Aorta (tissue), 5 donors: ENCODE measurements at regions of chr11 and their contacts with region 1.

Region 1: DNA sequence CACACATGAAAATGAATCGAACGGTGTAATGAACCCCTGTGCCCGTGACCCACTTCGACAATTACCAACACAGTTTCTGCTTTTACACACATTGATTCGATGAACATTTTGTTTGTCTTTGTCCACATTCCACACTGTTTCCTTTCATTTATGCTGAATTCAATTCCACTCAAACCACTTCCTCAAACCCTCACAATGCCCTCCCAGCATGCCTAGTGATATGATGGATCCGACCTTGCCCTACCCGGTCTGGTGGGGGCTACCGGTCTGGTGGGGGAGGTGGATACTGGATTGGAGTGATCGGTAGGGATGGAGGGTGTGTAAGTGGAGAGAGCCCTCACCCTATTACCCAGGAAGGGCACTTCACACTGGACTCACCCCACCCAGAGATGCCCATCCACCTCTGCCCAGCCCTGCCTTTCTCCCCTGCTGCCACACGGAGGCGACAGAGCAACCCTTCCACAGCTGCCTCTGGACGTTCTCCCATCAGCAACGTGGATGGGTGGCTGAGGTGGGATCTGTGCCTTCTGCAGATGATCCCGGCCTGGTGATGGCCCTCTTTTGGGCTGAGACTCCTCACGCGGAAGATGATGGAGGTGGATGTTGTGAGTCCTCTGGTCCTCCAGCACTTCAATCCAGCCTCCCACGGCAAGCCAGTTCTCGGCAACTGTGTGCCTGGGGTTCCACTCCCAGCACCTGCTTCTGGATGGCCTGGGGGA is 33.0 kb upstream of the P2RY2 start:
- DNase-seq: peak; percentile 83 to 88
- ATAC-seq: peak; percentile 81
- H3K4me3 ChIP-seq: no peak overlapping the region
- H3K27ac ChIP-seq: peak overlapping the region in 1 of 2 donors; percentile 39
- H3K4me1 ChIP-seq: no peaks in the 10 kb centered on the region
- H3K27me3 ChIP-seq: no peaks in the 10 kb centered on the region

Region 2: GRCh38 chr11:73288873-73289707 is 104.0 kb after region 1 on chr11:
- intact Hi-C with region 1: loop called (anchors 1 to 5 kb)
- DNase-seq: peak; percentile 90
- ATAC-seq: peak; percentile 91
- H3K4me3 ChIP-seq: no peak overlapping the region
- H3K27ac ChIP-seq: peak overlapping the region in 1 of 2 donors; percentile 22
- H3K4me1 ChIP-seq: no peaks in the 10 kb centered on the region
- H3K27me3 ChIP-seq: no peaks in the 10 kb centered on the region